Ovary (tissue), 10 donors: ENCODE measurements at regions of chr17 and their contacts with region 1.

Region 1: DNA sequence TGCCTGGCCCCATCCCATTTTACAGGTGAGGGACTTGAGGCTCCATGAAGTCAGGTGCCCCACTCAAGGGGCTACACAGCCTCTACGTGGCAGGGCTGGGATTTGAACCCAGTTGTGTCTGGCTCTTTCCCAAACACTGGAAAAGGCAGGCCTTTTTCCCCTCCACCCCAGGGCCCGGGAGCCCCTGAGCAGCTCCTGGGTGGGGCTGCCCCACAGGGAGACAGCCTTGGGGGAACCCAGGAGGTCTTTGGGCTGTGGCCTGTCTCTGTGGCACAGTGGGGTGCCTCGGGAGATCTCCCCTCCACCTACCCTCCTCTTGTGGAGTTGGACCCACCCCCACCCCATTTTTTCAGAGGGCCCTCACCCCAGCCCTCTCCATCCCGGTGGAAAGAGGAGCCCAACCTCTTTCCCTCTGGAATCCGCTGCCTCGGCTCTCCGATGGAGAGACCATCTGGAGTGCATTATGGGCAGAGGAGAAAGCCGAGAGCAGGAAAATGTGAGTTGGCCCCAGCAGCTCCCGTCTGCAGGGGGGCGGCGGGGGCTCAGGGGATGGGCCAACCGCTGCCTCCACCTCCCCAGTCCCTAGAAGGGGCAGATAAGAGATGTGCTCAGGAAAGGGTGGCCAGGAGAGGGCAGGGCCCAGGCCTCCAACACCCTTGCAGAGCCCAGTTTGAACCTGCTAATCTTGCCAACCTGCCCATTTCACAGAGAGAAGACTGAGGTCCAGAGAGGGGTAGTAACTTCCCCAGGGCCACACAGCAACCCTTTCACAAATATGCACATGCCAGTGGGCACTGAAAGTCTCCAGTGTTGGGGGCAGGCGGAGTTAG is 15.4 kb upstream of the TMEM92 start:
- DNase-seq: peak in 4 of 5 donors; percentile 44 to 58 (median 50)
- H3K4me3 ChIP-seq: no peak overlapping the region
- H3K27ac ChIP-seq: peak overlapping the region; percentile 71 to 75
- H3K4me1 ChIP-seq: peaks cover 18% of the 10 kb centered on the region
- H3K27me3 ChIP-seq: no peaks in the 10 kb centered on the region
- CTCF ChIP-seq: no peak
- EP300 ChIP-seq: no peak
- POLR2A ChIP-seq: no peak

Region 2: DNA sequence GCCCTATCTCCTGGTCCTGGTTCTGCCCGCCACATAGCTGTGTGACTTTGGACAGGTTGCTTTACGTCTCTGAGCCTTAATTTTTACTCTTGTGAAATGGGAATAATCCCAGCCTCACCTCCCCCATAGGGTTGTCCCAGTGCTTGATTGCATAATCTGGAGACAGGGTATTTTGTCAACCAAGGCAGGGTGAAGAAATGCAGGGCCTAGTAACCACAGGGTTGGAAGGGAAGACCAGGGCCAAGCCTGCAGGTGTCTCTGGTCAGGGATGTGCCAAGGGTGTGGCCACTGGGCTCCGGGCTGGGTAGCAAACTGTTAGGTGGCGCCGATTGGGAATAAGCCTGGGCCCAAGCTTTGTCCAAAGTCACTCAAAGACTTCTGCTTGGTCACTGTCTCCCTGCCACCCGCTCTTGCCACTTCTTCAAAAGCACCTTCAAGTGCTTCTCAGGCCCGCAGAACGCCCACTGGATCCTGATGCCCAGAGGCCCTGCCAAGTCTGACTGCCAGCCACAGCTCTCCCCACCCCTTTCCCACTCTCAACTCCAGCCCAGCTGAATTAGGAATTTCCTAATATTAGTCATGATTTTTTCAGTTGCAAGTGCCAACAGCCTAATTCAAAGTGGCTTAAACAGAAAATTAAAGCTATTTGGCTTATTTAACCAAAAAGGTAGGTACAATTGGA is 36.9 kb before region 1 on chr17:
- intact Hi-C with region 1: loop called in 1 of 4 experiments (anchors 5 kb)
- DNase-seq: peak; percentile 58 to 72 (median 66)
- H3K4me3 ChIP-seq: no peak overlapping the region
- H3K27ac ChIP-seq: peak overlapping the region; percentile 33 to 53
- H3K4me1 ChIP-seq: peaks cover 16% of the 10 kb centered on the region
- H3K27me3 ChIP-seq: no peaks in the 10 kb centered on the region
- CTCF ChIP-seq: no peak
- EP300 ChIP-seq: no peak
- POLR2A ChIP-seq: no peak